Common myeloid progenitor, CD34-positive (primary cell): ENCODE measurements at regions of chr12 and their contacts with region 1.

Region 1: GRCh38 chr12:120428597-120429229 is 9.2 kb upstream of the COX6A1 start:
- DNase-seq: no peak
- H3K4me3 ChIP-seq: no peak overlapping the region
- H3K27ac ChIP-seq: no peak overlapping the region
- H3K4me1 ChIP-seq: no peaks in the 10 kb centered on the region
- H3K27me3 ChIP-seq: peaks cover 0 to 7% (median 3%) of the 10 kb centered on the region in 5 experiments

Region 2: DNA sequence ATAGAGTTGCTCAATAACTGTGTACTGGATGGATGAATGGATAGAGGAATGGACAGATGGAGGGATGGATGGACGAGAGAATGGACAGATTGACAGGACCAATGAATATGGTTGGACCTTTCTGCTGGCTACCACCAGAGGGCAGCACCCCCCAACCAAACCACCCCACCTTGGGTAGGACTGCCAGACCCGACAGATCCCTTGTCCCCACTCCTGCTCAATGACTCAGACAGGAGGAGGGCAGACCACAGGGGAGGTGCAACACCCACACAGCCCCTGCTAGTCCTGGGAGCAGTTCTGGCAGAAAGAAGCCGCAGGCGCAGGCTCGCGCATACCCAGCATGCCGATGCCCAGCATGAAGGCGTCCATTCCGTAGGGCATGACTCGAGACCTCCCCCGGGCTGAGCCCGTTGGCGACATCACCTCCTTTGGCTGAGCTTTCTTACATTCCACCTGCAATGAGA is 72.1 kb before region 1 on chr12:
- CTCF ChIA-PET with region 1: interaction called, 20 read pairs
- POLR2A ChIA-PET with region 1: interaction called, 3 read pairs
- DNase-seq: peak; percentile 89 to 94 (median 93)
- H3K4me3 ChIP-seq: no peak overlapping the region
- H3K27ac ChIP-seq: no peak overlapping the region
- H3K4me1 ChIP-seq: peaks cover 0 to 7% (median under 1%) of the 10 kb centered on the region in 4 experiments
- H3K27me3 ChIP-seq: peaks cover 16 to 32% (median 24%) of the 10 kb centered on the region in 5 experiments

Region 3: GRCh38 chr12:120361506-120362208 is 67.1 kb before region 1 on chr12:
- CTCF ChIA-PET with region 1: interaction called, 20 read pairs
- POLR2A ChIA-PET with region 1: no interaction called
- DNase-seq: peak; percentile 65 to 85 (median 83)
- H3K4me3 ChIP-seq: peak overlapping the region in 2 of 7 experiments; percentile 48
- H3K27ac ChIP-seq: no peak overlapping the region
- H3K4me1 ChIP-seq: peaks cover 0 to 9% (median 3%) of the 10 kb centered on the region in 4 experiments
- H3K27me3 ChIP-seq: peaks cover 17 to 80% (median 49%) of the 10 kb centered on the region in 5 experiments